Posterior cingulate gyrus (tissue), 11 donors: ENCODE measurements at regions of chr2 and their contacts with region 1.

Region 1: DNA sequence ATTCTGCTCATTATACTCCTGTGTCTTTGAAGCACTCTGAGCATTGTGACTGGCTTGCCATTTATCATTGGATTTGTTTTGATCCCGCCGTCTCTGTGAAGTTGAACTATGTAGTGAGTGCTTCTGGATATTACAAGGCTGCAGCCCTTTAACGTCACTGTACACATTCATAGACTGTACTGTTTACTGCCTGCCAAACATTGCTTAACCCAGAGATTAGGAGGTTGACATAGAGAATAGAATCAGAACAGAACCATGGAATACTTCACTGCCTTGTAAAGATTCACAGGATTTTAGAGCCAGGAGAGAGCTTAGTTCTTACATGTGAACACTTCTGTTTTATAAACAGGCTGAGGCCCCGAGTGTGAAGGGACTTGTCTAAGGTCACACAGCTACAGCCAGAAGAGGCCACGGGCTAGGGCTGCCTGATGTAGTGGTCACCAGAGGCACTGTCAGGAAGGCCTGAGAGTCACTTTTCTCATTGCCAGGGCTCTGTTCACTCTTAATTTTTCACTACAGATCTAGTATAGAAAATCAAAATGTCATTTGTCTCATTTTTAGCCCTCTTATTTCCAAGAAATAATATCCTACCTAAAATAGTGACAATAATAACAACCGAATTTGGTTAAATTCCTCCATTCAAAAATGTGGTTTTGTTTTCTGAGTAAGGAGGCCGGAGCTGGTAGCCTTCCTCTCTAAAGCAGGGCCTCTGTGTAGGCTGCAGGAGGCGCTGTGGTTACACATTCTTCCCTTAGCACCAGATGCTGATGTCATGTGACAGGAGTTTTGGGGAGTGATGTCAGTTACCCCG is 87.9 kb downstream of the UGGT1 start:
- DNase-seq: peak in 9 of 10 donors; percentile 29 to 94 (median 69)

Region 2: GRCh38 chr2:126575631-126576030 is 1603.2 kb before region 1 on chr2:
- intact Hi-C with region 1: no loop called
- DNase-seq: no peak

Region 3: DNA sequence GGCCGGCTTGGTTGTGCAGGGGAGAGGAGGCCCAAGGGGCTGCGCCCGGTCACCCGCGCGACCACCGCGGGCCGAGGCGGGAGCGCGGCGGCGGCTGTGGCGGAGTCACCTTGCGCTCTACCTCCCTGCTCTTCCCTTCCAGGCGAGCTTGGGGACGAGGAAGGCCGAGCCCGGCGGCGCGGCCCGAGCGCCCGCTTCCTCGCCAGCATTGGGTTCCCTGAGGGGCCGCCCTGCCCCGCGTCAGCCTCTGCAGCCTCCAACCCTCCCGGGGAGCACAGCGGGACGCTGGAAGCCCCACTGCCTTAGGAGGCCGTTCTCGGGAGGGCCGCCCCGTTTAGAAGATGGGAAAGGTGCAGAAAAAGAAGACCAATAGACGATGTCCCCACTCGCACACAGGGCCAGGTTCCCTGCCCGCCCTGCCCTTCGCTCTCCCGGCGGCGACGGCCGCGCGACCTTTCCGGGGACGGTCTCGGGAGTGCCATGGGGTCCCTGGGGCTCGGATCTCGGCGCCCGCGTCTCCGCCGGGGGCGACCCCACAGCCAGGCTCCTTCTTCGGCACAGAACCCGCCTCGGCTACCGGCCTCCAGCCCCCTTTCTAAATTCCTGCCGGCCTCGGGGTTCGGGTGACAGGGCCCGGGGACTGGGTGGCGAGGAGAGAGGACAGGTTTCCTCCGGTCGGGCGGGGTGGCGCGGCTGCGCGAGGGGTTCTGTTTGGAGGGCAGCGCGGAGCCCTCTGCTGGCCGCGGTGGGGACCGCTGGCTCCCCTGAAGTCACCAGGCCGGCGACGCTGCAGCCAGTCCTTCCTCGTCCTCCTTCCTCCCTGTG is 54.3 kb after region 1 on chr2:
- intact Hi-C with region 1: loop called (anchors 2 kb)
- DNase-seq: peak; percentile 82 to 98 (median 90)

Region 4: DNA sequence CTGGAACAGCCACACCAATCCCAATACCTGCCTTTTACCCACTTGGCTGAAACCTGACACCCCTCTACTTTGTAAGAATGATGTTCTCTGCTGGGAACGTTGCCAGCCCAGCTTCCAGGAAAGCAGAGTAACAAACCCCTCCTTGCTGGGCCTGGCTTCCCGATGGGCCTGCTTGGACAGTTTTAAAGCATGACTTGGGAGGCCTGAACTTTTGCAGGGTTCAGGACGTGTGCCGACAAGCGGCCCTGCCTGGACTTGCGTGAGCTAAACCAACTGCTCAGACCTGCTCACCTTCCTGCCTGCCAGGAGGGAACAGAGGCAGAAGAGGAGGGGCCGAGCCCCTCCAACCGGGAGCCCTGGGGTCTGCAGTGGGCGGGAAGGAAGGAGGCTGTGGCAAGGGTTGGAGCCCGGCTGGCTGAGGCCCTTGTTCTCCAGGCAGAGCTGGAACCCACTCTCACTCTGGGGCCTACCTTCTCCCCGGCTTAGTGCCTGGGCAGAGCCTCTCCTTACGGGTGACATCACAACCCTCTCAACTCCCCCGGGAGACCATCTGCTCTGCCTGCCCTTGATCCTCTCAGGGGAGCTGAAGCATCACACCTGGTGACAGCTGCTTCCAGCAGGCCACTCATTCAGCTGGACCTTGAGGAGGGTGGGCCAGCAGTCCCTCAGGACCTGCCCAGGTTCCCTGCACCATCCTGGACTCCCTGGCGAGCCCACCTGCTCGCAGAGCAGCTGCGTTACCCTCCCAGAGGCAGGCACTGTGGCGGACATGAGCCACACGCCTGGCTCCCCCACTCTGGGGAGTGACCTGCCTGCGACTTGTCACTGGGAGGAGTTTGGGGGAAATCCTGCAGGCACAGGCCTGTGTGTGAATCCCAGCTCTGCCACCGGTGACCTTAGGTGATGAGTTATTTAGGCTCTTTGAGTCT is 126.6 kb after region 1 on chr2:
- intact Hi-C with region 1: loop called (anchors 5 kb)
- DNase-seq: peak in 5 of 10 donors; percentile 38 to 86 (median 71)

Region 5: DNA sequence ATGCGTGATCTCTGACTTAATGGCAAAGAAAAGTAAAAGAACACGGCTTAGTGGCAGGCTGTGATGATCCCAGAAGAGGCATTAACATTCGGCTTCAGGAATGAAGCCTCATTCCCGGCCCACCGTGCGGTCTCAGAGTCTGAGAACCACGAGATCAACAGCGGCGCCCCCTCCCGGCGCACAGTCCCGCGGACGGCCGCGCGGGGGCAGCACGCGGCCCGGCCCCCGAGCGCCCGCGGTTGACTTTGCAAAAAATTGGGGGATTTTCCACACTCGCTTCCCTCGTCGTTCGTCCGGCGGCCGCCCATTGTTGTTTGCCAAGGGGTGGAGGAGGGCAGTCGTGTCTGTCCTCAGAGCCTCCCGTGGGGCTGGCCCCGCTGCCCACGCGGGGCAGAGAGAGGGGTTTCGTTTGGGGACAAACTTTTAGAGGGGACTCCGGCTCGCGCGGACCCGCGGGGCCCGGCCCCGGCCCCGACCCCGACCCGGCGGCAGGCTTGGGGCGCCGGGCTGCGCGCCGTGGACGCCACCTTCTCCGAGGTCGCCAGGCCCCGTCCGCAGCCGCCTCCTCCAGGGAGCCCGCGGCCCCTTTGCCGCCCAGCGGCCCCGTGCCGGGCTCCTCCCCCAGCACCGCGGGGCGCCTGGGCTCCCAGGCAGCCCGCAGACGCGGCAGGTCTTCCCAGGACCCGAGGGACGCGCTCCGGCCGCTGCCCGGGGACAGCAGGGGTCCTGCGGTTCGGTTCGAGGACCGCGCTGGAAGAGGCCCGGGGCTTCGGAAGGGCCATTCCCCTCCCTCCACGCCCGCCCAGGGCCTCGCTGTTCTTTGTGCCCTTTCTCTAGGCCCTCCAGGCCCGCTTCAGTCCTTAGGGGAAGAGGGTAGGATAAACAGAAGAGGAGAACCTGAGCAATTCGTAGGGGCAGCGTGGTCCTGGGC is 143.2 kb after region 1 on chr2:
- intact Hi-C with region 1: loop called (anchors 5 kb)
- DNase-seq: peak; percentile 77 to 98 (median 87)